Activated naive CD8-positive, alpha-beta T cell treated with anti-CD3 and anti-CD28 coated beads, Interleukin-2, amount 10 ng/mL, durations not matched to agents 7 days and 5 days (primary cell): ENCODE measurements at regions of chr1 and their contacts with region 1.

Region 1: GRCh38 chr1:155001675-155002463 is 733 bp upstream of the ZBTB7B start:
- DNase-seq: peak; percentile 96
- ATAC-seq: peak; percentile 68
- H3K4me3 Mint-ChIP-seq: peak overlapping the region; percentile 99
- H3K27ac Mint-ChIP-seq: peak overlapping the region; percentile 99
- H3K4me1 Mint-ChIP-seq: peaks cover 52% of the 10 kb centered on the region
- H3K27me3 Mint-ChIP-seq: no peaks in the 10 kb centered on the region

Region 2: DNA sequence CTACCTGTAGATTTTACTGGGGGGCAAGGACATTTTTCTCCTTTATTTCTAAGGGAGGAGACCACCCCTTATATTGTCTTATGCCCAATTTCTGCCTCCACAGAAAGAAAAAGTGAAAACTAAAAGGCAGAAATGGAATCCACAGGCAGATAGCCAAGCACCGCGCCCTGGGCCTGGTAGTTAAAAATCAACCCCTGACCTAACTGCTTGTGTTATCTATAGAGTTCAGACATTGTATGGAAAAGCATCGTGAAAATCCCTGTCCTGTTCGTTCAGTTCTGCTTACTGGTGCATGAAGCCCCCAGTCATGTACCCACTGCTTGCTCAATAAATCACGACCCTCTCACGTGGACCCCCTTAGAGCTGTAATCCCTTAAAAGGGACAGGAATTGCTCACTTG is 630.4 kb before region 1 on chr1:
- POLR2A ChIA-PET with region 1: no interaction called
- DNase-seq: no peak
- ATAC-seq: no peak
- H3K4me3 Mint-ChIP-seq: no peak overlapping the region
- H3K27ac Mint-ChIP-seq: no peak overlapping the region
- H3K4me1 Mint-ChIP-seq: peaks cover 8% of the 10 kb centered on the region
- H3K27me3 Mint-ChIP-seq: no peaks in the 10 kb centered on the region

Region 3: GRCh38 chr1:154906621-154907081 is 95.2 kb before region 1 on chr1:
- POLR2A ChIA-PET with region 1: no interaction called
- DNase-seq: no peak
- ATAC-seq: no peak
- H3K4me3 Mint-ChIP-seq: no peak overlapping the region
- H3K27ac Mint-ChIP-seq: no peak overlapping the region
- H3K4me1 Mint-ChIP-seq: no peaks in the 10 kb centered on the region
- H3K27me3 Mint-ChIP-seq: peaks cover 3% of the 10 kb centered on the region

Region 4: GRCh38 chr1:154955718-154956543 is 45.9 kb before region 1 on chr1 and contains the start of gene PBXIP1:
- POLR2A ChIA-PET with region 1: interaction called, 22 read pairs
- DNase-seq: peak; percentile 69
- ATAC-seq: peak; percentile 48
- H3K4me3 Mint-ChIP-seq: peak within 1 kb of the TSS; percentile 97
- H3K27ac Mint-ChIP-seq: peak within 1 kb of the TSS; percentile 99
- H3K4me1 Mint-ChIP-seq: peaks cover 60% of the 10 kb centered on the region
- H3K27me3 Mint-ChIP-seq: no peaks in the 10 kb centered on the region
- total RNA-seq, gene PBXIP1: 149 to 155 TPM

Region 5: GRCh38 chr1:154974063-154974807 is 27.6 kb before region 1 on chr1 and contains the start of gene CKS1B:
- POLR2A ChIA-PET with region 1: interaction called, 20 read pairs
- DNase-seq: peak; percentile 92
- ATAC-seq: peak; percentile 89
- H3K4me3 Mint-ChIP-seq: no peak within 1 kb of the TSS
- H3K27ac Mint-ChIP-seq: no peak within 1 kb of the TSS
- H3K4me1 Mint-ChIP-seq: peaks cover 37% of the 10 kb centered on the region
- H3K27me3 Mint-ChIP-seq: no peaks in the 10 kb centered on the region
- total RNA-seq, gene CKS1B: 112 to 114 TPM

Region 6: GRCh38 chr1:154982897-154983648 is 18.8 kb before region 1 on chr1 and contains the start of gene FLAD1:
- POLR2A ChIA-PET with region 1: interaction called, 36 read pairs
- DNase-seq: peak; percentile 90
- ATAC-seq: peak; percentile 100
- H3K4me3 Mint-ChIP-seq: no peak within 1 kb of the TSS
- H3K27ac Mint-ChIP-seq: no peak within 1 kb of the TSS
- H3K4me1 Mint-ChIP-seq: peaks cover 10% of the 10 kb centered on the region
- H3K27me3 Mint-ChIP-seq: no peaks in the 10 kb centered on the region
- total RNA-seq, gene FLAD1: 46.2 to 48.9 TPM

Region 7: DNA sequence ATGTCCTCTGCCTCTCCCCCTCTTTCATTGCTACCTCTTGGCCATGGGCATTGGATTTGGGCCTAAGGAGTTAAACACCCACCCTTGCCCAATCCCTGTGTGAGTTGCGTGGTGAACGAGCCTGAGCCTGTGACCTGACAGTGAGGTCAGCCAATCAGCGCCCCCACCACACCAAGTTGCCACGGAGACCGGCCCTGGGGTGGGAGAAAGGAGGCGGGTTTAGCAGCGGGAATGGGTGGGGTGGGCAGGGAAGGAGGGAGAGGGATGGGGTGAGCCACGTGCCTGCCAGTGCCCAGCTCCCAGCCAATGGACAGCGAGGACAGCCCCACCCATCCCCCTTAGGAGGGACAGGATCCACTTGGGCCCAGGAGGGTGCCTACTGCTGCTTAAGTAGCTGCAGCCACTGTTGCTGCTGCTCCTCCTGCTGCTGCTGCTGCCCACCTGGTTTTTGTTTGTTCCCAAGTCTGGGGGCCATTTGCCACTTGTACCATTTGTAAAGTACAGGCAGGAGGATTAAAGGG is 10.2 kb after region 1 on chr1:
- POLR2A ChIA-PET with region 1: interaction called, 10 read pairs
- DNase-seq: no peak
- ATAC-seq: no peak
- H3K4me3 Mint-ChIP-seq: no peak overlapping the region
- H3K27ac Mint-ChIP-seq: no peak overlapping the region
- H3K4me1 Mint-ChIP-seq: peaks cover 54% of the 10 kb centered on the region
- H3K27me3 Mint-ChIP-seq: no peaks in the 10 kb centered on the region

Region 8: GRCh38 chr1:155017041-155017945 is 15.4 kb after region 1 on chr1:
- POLR2A ChIA-PET with region 1: interaction called, 10 read pairs
- DNase-seq: peak; percentile 92
- ATAC-seq: peak; percentile 98
- H3K4me3 Mint-ChIP-seq: peak overlapping the region; percentile 74
- H3K27ac Mint-ChIP-seq: peak overlapping the region; percentile 70
- H3K4me1 Mint-ChIP-seq: peaks cover 42% of the 10 kb centered on the region
- H3K27me3 Mint-ChIP-seq: peaks cover 5% of the 10 kb centered on the region

Region 9: GRCh38 chr1:155038602-155039307 is 36.9 kb after region 1 on chr1:
- POLR2A ChIA-PET with region 1: no interaction called
- DNase-seq: no peak
- ATAC-seq: no peak
- H3K4me3 Mint-ChIP-seq: no peak overlapping the region
- H3K27ac Mint-ChIP-seq: no peak overlapping the region
- H3K4me1 Mint-ChIP-seq: peaks cover 8% of the 10 kb centered on the region
- H3K27me3 Mint-ChIP-seq: peaks cover 24% of the 10 kb centered on the region